ENCODE measurements at regions of chr1 and their contacts with region 1.

Region 1: DNA sequence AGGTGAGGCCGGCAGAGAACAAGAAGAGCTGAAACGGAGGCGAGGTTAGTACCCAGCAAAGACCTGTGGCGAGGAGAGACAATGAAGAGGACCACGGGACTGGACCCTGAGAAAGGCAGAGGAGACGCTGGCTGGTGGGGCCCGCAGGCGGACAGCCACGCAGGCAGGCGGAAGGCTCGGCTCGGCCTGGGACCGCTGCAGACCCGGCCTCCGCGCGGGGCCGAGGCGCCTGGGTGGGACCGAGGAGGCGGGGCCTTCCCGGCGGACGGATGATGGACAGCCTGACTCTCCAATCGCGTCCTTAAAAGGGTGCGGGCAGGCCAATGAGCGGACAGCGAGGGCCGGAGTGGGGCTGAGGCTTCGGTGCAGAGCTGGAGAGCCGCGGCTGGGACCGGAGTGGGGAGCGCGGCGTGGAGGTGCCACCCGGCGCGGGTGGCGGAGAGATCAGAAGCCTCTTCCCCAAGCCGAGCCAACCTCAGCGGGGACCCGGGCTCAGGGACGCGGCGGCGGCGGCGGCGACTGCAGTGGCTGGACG is at the start of gene MPZL1:
- DNase-seq: peak; percentile 95
- ATAC-seq: peak; percentile 99
- H3K4me3 Mint-ChIP-seq: peak within 1 kb of the TSS; percentile 83
- H3K27ac Mint-ChIP-seq: peak within 1 kb of the TSS; percentile 80
- H3K4me1 Mint-ChIP-seq: peaks cover 53% of the 10 kb centered on the region
- H3K27me3 Mint-ChIP-seq: no peaks in the 10 kb centered on the region
- total RNA-seq, gene MPZL1: 22.3 to 23.0 TPM

Region 2: DNA sequence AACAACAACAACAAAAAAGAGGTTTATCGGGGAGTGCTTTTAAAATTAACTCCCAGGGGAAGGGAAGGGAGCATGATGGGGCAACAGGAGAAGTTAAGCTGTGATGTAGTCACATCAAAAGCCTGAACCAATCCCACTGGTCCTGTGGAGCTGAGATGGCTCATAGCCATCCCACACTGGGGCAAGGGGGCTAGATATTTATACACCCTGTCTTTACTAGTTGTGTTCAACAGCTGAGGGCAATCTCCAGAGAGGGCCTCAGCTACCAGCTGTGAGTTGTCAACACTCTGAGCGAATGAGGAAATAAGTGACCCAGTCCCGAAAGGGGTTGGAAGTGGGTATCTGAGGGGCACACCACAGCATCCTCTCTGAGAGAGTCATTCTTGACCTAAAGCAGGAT is 137.1 kb before region 1 on chr1:
- CTCF ChIA-PET with region 1: no interaction called
- POLR2A ChIA-PET with region 1: no interaction called
- intact Hi-C with region 1: no loop called
- DNase-seq: no peak
- ATAC-seq: no peak
- H3K4me3 Mint-ChIP-seq: no peak overlapping the region
- H3K27ac Mint-ChIP-seq: no peak overlapping the region
- H3K4me1 Mint-ChIP-seq: no peaks in the 10 kb centered on the region
- H3K27me3 Mint-ChIP-seq: no peaks in the 10 kb centered on the region

Region 3: GRCh38 chr1:167803358-167804207 is 81.9 kb after region 1 on chr1:
- CTCF ChIA-PET with region 1: interaction called, 12 read pairs
- POLR2A ChIA-PET with region 1: no interaction called
- intact Hi-C with region 1: loop called in 1 of 2 experiments (anchors 1 kb)
- DNase-seq: peak; percentile 96
- ATAC-seq: peak; percentile 94
- H3K4me3 Mint-ChIP-seq: peak overlapping the region; percentile 64
- H3K27ac Mint-ChIP-seq: peak overlapping the region; percentile 97
- H3K4me1 Mint-ChIP-seq: peaks cover 24% of the 10 kb centered on the region
- H3K27me3 Mint-ChIP-seq: peaks cover under 1% of the 10 kb centered on the region

Region 4: DNA sequence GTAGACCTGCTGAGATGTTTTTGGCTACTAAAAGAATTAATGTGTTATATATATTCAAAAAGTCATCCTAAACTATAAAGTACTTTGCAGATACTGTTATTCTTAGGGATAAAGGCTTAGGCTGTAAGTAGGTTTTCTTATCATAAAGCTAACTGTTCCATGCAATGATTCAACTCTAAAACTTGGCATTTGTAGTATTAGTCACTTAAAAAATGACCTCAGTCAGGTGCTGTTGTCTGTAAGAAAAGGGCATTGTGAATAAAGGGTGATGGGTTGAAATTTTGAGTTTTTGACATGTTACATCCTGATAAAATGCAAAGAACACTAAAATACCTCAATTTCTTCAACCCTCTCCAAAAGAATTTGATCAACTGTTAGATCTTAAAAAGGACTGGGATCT is 159.4 kb after region 1 on chr1:
- CTCF ChIA-PET with region 1: no interaction called
- POLR2A ChIA-PET with region 1: no interaction called
- intact Hi-C with region 1: no loop called
- DNase-seq: no peak
- ATAC-seq: no peak
- H3K4me3 Mint-ChIP-seq: no peak overlapping the region
- H3K27ac Mint-ChIP-seq: no peak overlapping the region
- H3K4me1 Mint-ChIP-seq: no peaks in the 10 kb centered on the region
- H3K27me3 Mint-ChIP-seq: no peaks in the 10 kb centered on the region

Measured in activated CD4-positive, alpha-beta T cell treated with anti-CD3 and anti-CD28 coated beads for 36 hours (primary cell).